ENCODE measurements at regions of chr6 and their contacts with region 1.

Region 1: DNA sequence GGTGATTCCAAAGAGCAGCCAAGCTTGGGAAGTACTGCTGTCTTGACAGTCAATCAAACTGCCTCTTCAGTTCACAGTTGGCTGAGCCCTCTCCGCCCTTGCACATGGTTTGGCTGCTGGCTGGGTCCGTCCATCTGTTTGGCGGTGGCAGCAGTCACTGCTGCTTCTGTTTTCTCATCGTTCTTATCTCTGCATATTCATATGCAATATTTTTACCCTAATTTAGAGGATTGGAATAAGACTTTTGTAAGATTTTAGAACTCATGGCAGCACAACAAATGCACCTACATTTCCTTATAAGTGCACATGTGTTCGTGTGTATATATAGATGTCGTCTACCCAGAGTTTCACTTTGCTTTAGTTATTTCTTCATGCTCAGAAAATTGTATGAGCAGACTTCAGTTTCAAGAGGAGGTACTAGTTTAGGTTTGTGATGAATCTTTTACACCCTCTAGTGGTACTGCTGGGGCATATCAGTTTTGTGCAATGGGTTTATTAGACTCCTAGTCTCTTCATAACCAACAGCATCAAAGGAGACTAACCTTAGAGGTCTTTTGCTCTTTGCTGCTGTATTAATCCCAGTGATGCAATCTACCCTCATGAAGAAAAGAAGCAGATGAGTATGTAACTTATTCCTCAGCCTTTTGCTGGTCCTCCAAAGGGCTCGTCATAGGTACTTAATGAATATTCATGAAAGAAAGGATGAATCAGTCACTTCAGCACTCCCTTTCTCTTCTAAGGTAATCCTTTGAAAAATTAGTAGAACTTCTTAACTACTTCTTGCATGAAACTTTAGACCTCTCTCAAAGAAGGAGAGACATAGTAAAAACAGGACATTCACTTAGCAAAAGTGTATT is 44.3 kb downstream of the KHDC1L start:
- DNase-seq: peak; percentile 81
- H3K4me3 ChIP-seq: peak overlapping the region; percentile 48
- H3K27ac ChIP-seq: peak overlapping the region; percentile 46
- H3K4me1 ChIP-seq: peaks cover 54% of the 10 kb centered on the region
- CTCF ChIP-seq: peak; percentile 97

Region 2: GRCh38 chr6:72522719-72523141 is 658.3 kb before region 1 on chr6:
- CTCF ChIA-PET with region 1: no interaction called
- POLR2A ChIA-PET with region 1: no interaction called
- intact Hi-C with region 1: loop called (anchors 2 kb)
- DNase-seq: peak; percentile 42
- H3K4me3 ChIP-seq: no peak overlapping the region
- H3K27ac ChIP-seq: no peak overlapping the region
- H3K4me1 ChIP-seq: no peaks in the 10 kb centered on the region
- CTCF ChIP-seq: peak; percentile 69

Region 3: DNA sequence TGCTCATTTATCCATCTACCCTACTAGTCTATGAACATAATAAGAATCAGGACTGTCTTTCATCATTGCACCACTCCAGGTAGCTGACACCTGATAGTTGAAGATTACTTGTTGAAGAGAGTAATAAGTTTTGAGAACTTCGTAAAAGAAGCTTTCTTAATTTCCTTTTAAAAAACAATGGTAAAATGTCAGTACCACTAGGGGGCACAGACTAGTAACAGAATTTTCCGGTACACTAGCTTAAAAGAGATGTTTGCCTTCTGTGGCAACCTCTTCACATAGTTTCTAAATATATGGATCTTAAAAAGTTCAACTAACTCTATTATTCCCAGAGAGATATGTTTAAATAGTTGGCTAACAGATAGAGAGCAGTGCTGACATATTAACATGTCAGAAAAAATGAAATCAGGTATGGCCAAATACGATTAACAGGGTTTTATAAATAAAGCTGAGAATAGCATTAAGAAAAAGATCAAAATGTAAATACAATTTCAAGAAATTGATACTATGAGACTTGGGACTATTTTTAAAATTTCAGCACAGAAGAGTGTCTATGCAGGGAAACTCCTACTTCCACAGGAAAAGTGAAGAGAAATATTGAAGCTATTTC is 564.5 kb before region 1 on chr6:
- CTCF ChIA-PET with region 1: interaction called, 11 read pairs
- POLR2A ChIA-PET with region 1: interaction called, 9 read pairs
- intact Hi-C with region 1: loop called (anchors 1 kb)
- DNase-seq: peak; percentile 66
- H3K4me3 ChIP-seq: no peak overlapping the region
- H3K27ac ChIP-seq: no peak overlapping the region
- H3K4me1 ChIP-seq: peaks cover 25% of the 10 kb centered on the region
- CTCF ChIP-seq: peak; percentile 95

Region 4: DNA sequence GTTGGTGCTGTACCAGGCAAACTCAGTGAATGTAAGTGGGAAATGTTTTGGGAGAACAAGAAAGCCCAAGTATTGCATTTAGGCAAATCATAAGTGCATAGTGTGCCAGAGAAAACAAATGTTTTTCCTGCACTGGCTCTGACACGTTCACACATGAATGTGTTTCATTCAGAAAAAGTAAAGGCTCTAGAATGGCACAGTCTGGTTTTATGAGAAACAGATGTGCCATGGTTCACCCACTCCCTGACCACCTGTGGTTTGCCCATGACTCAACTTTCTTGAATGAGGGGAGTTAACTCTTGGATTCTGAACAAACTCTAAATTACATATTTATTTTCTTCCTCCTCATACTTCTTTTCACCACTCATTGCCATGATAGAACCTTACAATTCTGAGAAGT is 432.2 kb before region 1 on chr6:
- CTCF ChIA-PET with region 1: no interaction called
- POLR2A ChIA-PET with region 1: no interaction called
- intact Hi-C with region 1: no loop called
- DNase-seq: no peak
- H3K4me3 ChIP-seq: no peak overlapping the region
- H3K27ac ChIP-seq: no peak overlapping the region
- H3K4me1 ChIP-seq: no peaks in the 10 kb centered on the region
- CTCF ChIP-seq: no peak